ENCODE measurements at regions of chr21 and their contacts with region 1.

Region 1: GRCh38 chr21:45698493-45699184 is 55.1 kb downstream of the PCBP3 start:
- DNase-seq: no peak
- ATAC-seq: no peak
- H3K4me3 ChIP-seq: no peak overlapping the region
- H3K27ac ChIP-seq: no peak overlapping the region
- H3K4me1 ChIP-seq: no peaks in the 10 kb centered on the region
- H3K27me3 ChIP-seq: no peaks in the 10 kb centered on the region
- CTCF ChIP-seq: no peak
- POLR2A ChIP-seq: no peak

Region 2: GRCh38 chr21:45596704-45597318 is 101.8 kb before region 1 on chr21:
- in situ Hi-C with region 1: loop called in 1 of 4 experiments (anchors 25 kb)
- intact Hi-C with region 1: no loop called
- DNase-seq: peak; percentile 15 to 20
- ATAC-seq: no peak
- H3K4me3 ChIP-seq: no peak overlapping the region
- H3K27ac ChIP-seq: no peak overlapping the region
- H3K4me1 ChIP-seq: no peaks in the 10 kb centered on the region
- H3K27me3 ChIP-seq: peaks cover 7 to 23% (median 13%) of the 10 kb centered on the region in 3 donors
- CTCF ChIP-seq: peak; percentile 37 to 68 (median 52)
- POLR2A ChIP-seq: no peak

Region 3: GRCh38 chr21:46171996-46172862 is 473.6 kb after region 1 on chr21:
- in situ Hi-C with region 1: no loop called
- intact Hi-C with region 1: no loop called
- DNase-seq: no peak
- ATAC-seq: no peak
- H3K4me3 ChIP-seq: no peak overlapping the region
- H3K27ac ChIP-seq: no peak overlapping the region
- H3K4me1 ChIP-seq: no peaks in the 10 kb centered on the region
- H3K27me3 ChIP-seq: no peaks in the 10 kb centered on the region
- CTCF ChIP-seq: no peak
- POLR2A ChIP-seq: no peak